MCF 10A (cell line): ENCODE measurements at regions of chr20 and their contacts with region 1.

Region 1: GRCh38 chr20:23161968-23162696 is 76.0 kb upstream of the CD93 start:
- DNase-seq: peak; percentile 100
- H3K4me3 Mint-ChIP-seq: no peak overlapping the region
- H3K27ac Mint-ChIP-seq: peak overlapping the region; percentile 92
- H3K4me1 Mint-ChIP-seq: peaks cover 64% of the 10 kb centered on the region
- H3K27me3 Mint-ChIP-seq: no peaks in the 10 kb centered on the region
- CTCF ChIP-seq: no peak

Region 2: DNA sequence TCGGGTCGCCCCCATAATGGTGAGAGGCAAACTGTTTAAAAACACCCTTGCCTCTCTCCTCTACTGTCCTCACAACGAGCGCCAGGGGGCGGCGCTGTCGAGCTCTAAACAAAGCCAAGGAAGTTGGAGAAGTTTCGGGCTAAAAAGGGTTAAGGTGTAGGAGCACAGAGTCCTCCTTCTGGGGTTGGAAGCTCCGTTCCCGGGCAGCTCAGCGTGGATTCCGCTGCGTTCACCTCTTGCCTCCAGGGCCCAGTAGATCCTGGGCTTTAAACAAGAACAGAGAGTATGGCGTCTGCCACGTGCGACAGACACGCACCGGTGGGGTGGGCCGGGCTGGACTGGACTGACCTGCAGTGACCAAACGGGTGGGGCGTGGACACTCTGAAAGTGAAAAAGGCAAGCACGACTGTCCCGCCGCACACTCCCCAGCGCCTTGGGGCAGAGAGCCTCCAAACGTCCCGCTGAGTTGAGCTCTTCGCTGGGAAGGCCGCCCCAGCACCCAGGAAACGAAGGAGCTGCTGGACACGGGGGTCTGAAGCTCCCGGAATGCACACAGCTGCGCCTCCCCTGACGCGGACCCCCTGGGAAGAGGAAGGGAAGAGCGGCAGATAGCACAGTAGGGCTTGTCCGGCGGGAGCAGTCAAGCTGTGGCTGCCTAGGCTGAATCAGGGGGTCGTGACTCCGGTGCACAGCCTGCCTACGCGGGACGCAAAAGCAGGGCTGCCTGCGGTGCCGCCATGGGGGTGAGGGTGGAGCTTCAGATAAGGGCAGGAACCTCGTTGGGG is 111.1 kb before region 1 on chr20:
- CTCF ChIA-PET with region 1: interaction called, 6 read pairs
- POLR2A ChIA-PET with region 1: interaction called, 9 read pairs
- intact Hi-C with region 1: loop called (anchors 2 kb)
- DNase-seq: peak; percentile 92
- H3K4me3 Mint-ChIP-seq: peak overlapping the region; percentile 74
- H3K27ac Mint-ChIP-seq: peak overlapping the region; percentile 92
- H3K4me1 Mint-ChIP-seq: peaks cover 17% of the 10 kb centered on the region
- H3K27me3 Mint-ChIP-seq: no peaks in the 10 kb centered on the region
- CTCF ChIP-seq: peak; percentile 78

Region 3: GRCh38 chr20:23099791-23100698 is 62.1 kb before region 1 on chr20:
- CTCF ChIA-PET with region 1: interaction called, 9 read pairs
- POLR2A ChIA-PET with region 1: interaction called, 58 read pairs
- intact Hi-C with region 1: no loop called
- DNase-seq: peak; percentile 81
- H3K4me3 Mint-ChIP-seq: peak overlapping the region; percentile 12
- H3K27ac Mint-ChIP-seq: no peak overlapping the region
- H3K4me1 Mint-ChIP-seq: peaks cover 49% of the 10 kb centered on the region
- H3K27me3 Mint-ChIP-seq: no peaks in the 10 kb centered on the region
- CTCF ChIP-seq: no peak

Region 4: GRCh38 chr20:23143098-23143497 is 19.0 kb before region 1 on chr20:
- CTCF ChIA-PET with region 1: interaction called, 66 read pairs
- POLR2A ChIA-PET with region 1: interaction called, 555 read pairs
- intact Hi-C with region 1: loop called (anchors 2 kb)
- DNase-seq: peak; percentile 89
- H3K4me3 Mint-ChIP-seq: no peak overlapping the region
- H3K27ac Mint-ChIP-seq: peak overlapping the region; percentile 82
- H3K4me1 Mint-ChIP-seq: peaks cover 65% of the 10 kb centered on the region
- H3K27me3 Mint-ChIP-seq: no peaks in the 10 kb centered on the region
- CTCF ChIP-seq: no peak

Region 5: DNA sequence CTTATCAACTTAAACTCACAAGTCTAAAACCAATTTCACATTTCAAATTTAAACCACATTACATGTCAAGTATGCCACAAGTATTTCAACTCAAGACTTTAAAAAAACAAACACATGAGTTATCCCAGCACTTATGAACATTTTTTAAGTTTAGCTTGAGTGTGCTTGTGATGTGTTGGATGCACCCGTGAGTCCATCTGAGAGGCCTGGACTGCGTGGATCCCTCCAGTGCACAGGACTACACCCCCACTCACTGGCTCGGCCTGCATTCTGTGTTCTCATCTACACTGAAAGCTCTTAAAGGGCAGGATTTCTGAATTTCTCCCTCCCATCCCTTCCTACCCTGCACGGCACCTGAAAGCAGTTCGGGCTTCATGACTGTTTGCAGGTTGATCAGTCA is 52.8 kb after region 1 on chr20:
- CTCF ChIA-PET with region 1: no interaction called
- POLR2A ChIA-PET with region 1: no interaction called
- intact Hi-C with region 1: no loop called
- DNase-seq: no peak
- H3K4me3 Mint-ChIP-seq: no peak overlapping the region
- H3K27ac Mint-ChIP-seq: no peak overlapping the region
- H3K4me1 Mint-ChIP-seq: no peaks in the 10 kb centered on the region
- H3K27me3 Mint-ChIP-seq: no peaks in the 10 kb centered on the region
- CTCF ChIP-seq: no peak

Region 6: DNA sequence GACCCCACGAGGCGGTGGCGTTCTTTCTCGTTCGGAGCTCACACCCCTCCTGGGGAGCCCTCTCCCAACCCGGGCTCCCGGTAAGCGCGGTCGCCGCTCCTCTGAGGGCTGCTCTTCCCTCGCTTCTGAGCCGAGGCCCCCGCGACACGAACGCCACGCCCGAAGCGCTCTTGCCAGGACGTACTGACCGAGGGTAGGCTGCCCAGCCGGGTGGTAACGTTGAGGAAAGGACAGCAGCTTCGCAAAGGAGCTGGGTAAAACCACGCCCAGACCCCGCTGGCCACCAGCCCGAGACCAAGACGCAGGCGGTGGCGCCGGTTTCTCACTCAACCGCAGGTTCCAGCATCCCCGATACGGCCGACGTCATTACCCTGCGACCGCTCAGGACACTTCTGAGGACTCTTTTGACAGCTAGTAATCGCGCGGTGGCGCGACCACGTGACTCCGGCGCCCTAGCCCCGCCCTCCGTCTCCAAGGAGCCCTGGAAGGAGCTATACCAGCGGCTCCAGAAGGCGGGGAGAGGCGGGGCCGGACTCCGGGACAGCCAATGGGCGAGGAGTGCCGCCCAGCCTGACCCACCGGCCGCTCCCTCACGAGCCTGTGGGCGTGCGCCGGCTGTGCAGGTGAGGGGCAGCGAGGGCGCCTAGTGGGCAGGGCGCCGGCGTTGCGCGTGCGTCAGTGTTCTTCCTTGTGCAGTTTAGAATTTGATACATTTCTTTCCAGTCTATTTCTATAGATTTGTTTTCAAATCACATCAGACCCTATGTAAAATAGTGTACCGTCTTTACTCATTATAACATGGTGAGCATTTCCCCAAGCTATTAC is 195.8 kb after region 1 on chr20:
- CTCF ChIA-PET with region 1: no interaction called
- POLR2A ChIA-PET with region 1: interaction called, 15 read pairs
- intact Hi-C with region 1: no loop called
- DNase-seq: peak; percentile 99
- H3K4me3 Mint-ChIP-seq: peak overlapping the region; percentile 86
- H3K27ac Mint-ChIP-seq: peak overlapping the region; percentile 83
- H3K4me1 Mint-ChIP-seq: peaks cover 4% of the 10 kb centered on the region
- H3K27me3 Mint-ChIP-seq: no peaks in the 10 kb centered on the region
- CTCF ChIP-seq: no peak